ENCODE measurements at regions of chr10 and their contacts with region 1.

Region 1: DNA sequence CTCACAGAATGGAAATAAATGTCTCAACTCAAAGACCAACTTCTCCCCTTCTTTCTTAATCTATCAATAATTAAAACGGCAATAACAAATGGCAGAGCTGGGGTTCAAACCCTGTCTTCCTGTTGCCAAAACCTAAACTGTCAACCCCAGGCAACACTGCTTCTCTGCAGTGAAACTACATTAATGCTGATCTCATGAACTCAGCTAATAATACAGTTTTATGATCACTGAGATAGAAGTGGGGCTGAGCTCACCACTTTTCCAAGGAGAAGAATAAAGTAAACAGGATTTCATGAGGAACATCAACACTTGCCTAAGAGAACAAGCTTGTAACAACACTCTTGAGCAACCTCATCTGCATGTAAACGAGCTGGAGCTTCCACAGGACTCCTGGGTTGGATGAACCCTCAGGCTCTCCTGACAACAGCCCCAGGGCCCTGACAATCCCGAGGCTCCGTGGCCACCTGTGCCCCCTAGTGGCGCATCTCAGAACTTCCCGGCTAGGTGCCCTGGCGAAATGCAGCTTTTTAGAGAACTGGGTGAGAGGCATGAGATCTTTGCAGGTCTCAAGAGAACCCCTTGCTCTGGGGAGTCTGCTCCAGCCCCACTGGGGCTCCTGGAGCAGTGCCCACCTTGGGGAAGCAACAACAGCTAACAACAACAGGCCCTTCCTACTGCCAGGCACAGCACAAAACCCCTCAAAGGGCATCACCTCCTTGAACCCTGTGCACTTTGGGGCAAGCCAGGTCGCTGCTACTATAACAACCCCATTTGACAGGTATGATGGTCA is 169.3 kb downstream of the SH3PXD2A start:
- DNase-seq: peak; percentile 86
- CTCF ChIP-seq: peak; percentile 96

Region 2: GRCh38 chr10:103592186-103593021 is 93.7 kb before region 1 on chr10:
- CTCF ChIA-PET with region 1: interaction called, 196 read pairs
- POLR2A ChIA-PET with region 1: no interaction called
- DNase-seq: peak; percentile 86
- CTCF ChIP-seq: peak; percentile 85

Region 3: DNA sequence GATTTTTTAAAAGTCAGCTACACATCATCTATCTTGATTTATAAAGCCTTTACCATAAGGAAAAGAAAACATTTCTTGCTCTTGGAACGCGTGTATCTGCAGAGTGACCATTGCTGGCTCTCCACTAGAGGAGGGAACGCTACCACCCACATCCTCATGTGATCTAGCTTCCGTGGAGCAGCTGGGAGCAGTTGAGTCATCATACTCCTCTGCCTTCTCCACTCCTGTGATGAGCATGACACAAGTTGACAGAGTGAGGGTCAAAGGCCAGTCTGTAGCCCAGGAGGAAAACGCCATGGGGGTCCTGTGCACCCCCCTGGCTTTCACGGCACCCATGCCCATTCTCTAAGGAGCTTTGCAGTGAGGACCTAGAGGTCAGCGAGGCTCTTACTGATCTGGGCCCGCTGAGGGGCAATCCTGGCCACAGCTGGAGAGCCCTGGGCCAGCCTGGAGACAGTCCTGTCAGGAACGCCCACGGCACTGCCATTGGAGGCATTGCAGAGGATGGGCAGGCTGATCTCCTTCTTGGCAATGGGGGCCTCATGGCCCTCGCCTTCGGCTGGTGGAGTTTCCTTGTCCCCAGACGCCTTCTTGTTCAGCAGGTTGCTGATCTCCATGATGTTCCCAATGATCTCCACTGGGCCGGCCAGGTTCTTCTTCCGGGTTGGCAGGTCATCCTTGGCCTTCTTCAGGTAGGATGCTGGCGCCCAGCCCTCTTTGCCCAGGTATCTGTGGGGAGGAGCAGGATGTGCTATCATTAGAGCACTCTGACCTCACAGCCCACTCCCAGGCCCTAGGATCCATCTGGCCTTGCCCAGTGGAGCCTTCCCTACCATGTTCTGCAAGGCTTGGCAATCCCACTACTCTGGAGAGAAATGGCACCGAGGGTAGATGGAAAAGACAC is 73.4 kb before region 1 on chr10:
- CTCF ChIA-PET with region 1: interaction called, 196 read pairs
- POLR2A ChIA-PET with region 1: no interaction called
- DNase-seq: no peak
- CTCF ChIP-seq: no peak

Region 4: DNA sequence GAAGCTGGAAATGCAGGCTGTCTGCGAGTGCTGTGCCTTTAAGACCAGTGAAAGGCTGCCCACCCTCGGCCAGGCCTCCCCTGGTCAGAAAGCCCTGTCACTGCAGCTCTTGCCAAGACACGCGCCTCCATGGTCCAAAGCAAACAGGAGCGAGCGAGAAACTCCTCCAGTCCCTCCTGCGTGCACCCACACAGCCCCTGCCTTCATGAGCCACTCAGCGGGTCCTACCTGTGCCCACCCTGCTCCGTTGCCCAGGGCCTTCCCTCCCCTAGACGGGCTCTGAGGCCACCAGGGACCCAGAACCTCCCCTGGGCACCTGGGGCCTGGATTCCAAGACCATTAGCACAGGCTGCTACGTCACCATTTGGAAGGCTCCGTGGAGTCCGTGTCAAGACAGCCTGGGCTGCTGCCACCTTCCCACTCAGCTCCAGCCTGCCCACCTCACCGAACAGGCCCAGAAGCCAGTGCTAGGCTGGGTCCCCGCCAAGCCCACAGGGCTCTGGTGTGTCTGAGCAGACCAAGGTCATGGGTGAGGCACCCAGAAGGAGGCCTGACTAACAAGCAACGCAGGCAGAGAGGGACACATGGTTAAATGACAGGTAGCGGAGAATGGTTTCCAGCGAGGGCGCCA is 48.0 kb before region 1 on chr10:
- CTCF ChIA-PET with region 1: interaction called, 32 read pairs
- POLR2A ChIA-PET with region 1: no interaction called
- DNase-seq: no peak
- CTCF ChIP-seq: no peak

Region 5: GRCh38 chr10:103666087-103666761 is 19.9 kb before region 1 on chr10:
- CTCF ChIA-PET with region 1: interaction called, 38 read pairs
- POLR2A ChIA-PET with region 1: no interaction called
- DNase-seq: no peak
- CTCF ChIP-seq: peak; percentile 22

Region 6: DNA sequence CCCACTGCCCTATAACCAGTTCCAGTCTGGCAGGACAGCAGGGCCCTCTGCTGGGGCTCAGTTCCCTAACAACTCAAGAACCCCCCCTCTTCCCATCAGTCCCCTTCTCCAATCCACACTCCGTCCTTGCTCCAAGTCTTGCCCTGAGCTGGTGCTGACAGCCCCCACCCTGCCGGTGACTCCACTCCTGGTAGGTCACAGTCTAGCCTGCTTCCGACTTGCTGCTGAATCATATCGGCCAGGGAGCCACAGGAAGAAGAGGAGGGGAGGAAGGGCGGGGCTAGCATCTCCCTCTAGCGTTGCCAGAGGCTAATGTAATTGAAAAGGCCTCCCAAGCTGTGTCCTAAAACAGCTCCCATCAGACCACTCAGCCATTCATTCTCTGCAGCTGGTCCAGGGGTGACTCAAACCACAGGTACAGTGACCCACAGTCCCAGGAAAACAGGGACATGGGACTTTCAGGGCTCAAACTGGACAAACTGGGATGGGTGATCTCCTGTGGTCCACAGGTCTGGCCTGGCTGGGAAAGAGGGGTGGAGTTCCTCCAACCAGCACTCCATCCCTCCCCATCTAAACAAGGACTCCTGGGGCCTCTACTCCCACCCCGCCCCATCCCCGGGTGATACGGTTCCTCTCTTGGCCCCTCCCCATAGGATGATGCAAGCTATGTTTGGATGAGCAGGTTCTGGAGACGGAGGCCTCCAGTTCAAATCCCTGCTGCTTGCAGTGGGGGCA is 10.5 kb after region 1 on chr10:
- CTCF ChIA-PET with region 1: interaction called, 69 read pairs
- POLR2A ChIA-PET with region 1: no interaction called
- DNase-seq: peak; percentile 82
- CTCF ChIP-seq: peak; percentile 23

Region 7: DNA sequence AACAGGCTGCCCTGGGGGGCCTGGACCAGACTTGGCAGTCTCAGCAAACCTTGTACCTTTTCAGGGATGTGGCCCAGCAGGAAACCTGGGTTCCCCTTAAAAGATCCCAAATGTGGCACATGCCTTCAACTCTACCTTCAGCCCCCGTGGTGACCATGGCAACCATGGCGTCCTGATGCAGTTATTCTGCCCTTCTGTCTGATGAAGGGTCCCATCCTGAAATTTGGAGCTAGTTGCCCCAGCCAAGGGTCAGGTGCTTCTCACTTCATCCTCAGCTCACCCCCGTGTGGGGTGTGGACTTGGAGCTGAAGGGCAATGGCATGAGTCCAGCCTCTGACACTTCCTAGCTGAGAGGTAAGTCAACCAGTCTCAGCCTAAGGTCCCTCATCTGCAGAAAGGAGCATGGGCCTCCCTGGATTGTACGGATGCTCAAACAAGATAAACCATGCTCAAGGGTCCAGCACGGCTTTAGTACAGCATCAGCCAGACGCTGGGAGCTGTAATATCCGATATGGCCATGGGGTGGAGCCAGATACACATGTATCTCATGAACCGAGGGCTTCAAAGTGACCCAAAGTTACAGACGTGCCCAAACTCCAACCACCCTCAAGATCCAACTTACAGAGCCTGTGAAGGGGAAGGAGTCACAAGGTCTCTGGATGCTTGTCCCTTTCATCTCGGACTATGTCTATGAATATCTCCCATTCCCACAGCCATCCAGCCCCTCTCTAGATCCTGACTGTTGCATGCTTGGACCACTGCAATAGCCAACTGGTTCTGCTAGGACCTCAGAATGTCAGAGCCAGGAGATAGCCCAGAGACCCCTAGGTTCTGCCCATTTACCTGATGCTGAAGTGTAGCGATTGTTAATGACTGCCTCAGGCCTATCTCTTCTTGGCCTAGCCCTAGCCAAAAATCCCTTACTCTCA is 26.8 kb after region 1 on chr10:
- CTCF ChIA-PET with region 1: interaction called, 12 read pairs
- POLR2A ChIA-PET with region 1: no interaction called
- DNase-seq: peak; percentile 78
- CTCF ChIP-seq: peak; percentile 88